ENCODE measurements at regions of chr11 and their contacts with region 1.

Region 1: DNA sequence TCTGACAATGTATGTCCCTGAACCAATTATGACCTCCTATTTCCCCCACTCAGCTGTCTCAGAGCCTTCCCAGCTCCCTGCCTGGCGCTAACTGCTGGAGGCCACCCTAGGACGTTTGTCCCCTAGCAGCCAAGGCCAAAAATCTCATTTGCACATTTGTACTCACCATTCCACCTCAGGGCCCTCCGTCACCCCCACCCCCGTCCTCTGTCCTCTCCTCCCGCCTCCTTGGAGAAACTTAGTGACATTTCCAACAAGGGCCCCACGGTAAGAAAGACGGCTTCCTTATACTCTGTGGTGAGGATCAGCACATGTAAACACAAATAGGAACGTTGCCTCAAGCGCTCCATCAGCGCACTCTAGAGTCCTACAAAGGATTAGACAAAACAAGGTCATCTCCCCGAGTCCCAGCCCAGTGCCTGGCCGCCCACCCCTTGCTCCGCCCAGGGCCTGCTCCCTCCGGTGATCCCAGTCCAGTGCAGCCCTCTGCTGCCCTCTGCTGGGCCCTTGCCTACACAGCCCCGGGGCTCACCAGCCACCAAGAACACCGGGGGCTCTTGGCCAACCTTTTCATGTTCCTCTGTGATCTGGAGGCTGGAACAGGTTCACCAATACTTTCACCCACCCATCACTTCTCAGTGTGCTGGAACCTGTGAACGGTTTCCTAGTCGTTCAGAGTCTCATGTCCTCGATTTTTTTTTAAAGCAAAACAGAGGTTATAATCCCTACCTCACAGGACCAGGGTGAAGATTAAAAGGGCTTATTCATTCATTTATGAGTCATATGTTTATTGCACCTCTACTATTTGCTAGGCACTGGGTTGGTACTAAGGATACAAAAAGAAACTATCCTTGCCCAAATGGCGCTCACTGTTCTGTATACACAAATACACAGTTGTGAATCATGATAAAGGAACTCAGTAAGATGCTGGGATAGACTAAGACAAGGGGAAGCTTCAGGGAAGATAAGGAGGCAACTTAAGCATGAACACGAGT is 15.3 kb upstream of the CTR9 start:
- DNase-seq: peak; percentile 95
- ATAC-seq: peak; percentile 99
- H3K4me3 Mint-ChIP-seq: peak overlapping the region; percentile 11
- H3K27ac Mint-ChIP-seq: peak overlapping the region; percentile 2
- H3K4me1 Mint-ChIP-seq: peaks cover 10% of the 10 kb centered on the region
- H3K27me3 Mint-ChIP-seq: no peaks in the 10 kb centered on the region

Region 2: DNA sequence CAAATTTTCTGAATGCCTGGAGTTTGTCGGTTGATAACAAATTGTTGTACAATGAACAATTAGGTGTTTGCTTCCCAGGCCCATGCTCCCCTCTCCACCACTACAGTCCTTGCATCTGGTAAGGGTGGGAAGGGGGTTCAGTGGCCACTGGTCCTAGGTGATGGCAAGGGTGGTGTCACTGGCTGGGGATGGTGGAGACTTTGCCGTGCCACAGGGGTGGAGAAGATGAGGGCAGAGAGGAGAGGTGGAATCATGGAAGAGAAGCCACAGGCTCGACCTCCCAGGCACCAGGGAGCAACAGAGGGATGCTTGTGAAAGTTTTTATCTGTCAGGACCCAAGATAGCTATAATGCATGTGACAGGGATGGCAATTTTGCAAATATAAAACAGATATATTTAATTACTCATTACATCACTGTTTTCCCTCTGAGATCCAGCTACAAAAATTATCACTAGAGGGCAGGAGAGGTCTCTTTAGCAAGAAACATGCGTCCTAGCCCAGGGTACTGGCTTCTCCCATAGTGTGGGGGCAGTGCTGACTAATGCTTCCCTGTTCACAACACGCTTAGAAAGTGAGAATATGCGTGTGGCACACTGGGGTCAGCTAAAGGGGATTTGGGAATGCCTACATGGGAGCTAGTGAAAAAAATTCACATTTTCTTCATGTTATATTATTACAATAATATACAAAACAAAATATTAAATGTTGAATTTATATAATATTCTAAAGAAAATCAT is 329.8 kb before region 1 on chr11:
- CTCF ChIA-PET with region 1: interaction called, 9 read pairs
- POLR2A ChIA-PET with region 1: no interaction called
- intact Hi-C with region 1: loop called (anchors 1 kb)
- DNase-seq: peak; percentile 70
- ATAC-seq: peak; percentile 87
- H3K4me3 Mint-ChIP-seq: no peak overlapping the region
- H3K27ac Mint-ChIP-seq: no peak overlapping the region
- H3K4me1 Mint-ChIP-seq: peaks cover 13% of the 10 kb centered on the region
- H3K27me3 Mint-ChIP-seq: no peaks in the 10 kb centered on the region

Region 3: DNA sequence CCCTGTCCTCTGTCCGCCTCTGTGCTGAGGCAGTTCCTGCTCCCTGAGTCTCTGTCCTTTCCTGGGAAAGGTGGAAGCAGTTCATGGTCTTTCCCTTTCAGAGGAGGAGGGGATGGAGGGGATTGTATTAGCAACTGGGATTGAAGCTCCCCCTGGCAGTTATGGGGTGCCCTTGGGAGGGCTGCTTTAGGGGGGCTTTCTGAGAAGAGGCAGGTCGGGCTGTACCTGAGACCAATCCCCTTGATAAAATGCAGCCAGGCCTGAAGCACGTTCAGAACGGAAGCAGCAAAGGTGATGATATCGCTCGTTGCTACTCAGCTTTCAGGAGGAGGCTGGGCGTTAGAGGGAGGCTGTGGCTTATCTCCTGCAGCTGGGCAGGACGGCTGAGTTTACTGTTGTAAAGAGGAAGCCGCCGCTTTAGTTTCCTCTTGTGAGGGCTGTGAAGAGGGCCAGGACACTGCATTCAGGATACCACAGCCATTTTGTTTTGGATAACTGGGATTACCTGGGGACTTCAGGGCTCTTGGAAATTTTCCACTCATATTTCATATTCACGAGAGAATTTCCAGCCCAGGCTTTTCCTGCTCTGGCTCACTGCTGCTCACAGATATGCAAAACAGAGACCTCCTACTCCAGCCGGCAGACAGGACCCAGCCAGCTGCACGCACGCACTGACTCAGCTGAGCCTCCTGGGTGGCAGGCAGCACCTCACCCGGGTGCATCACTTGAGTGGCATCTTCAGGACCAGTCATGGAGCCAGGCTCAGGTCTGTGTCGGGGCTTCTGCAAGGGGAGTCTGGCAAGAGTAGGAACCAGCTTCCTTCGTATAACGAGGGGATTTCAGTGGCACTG is 279.9 kb before region 1 on chr11:
- CTCF ChIA-PET with region 1: interaction called, 4 read pairs
- POLR2A ChIA-PET with region 1: no interaction called
- intact Hi-C with region 1: loop called in 1 of 2 experiments (anchors 5 kb)
- DNase-seq: peak; percentile 91
- ATAC-seq: peak; percentile 80
- H3K4me3 Mint-ChIP-seq: peak overlapping the region; percentile 91
- H3K27ac Mint-ChIP-seq: peak overlapping the region; percentile 98
- H3K4me1 Mint-ChIP-seq: peaks cover 88% of the 10 kb centered on the region
- H3K27me3 Mint-ChIP-seq: no peaks in the 10 kb centered on the region

Region 4: GRCh38 chr11:10623797-10624761 is 111.7 kb before region 1 on chr11:
- CTCF ChIA-PET with region 1: interaction called, 3 read pairs
- POLR2A ChIA-PET with region 1: no interaction called
- intact Hi-C with region 1: loop called (anchors 1 to 5 kb)
- DNase-seq: no peak
- ATAC-seq: no peak
- H3K4me3 Mint-ChIP-seq: no peak overlapping the region
- H3K27ac Mint-ChIP-seq: peak overlapping the region; percentile 73
- H3K4me1 Mint-ChIP-seq: peaks cover 14% of the 10 kb centered on the region
- H3K27me3 Mint-ChIP-seq: no peaks in the 10 kb centered on the region